Tibial artery (tissue), 4 donors: ENCODE measurements at regions of chr3 and their contacts with region 1.

Region 1: DNA sequence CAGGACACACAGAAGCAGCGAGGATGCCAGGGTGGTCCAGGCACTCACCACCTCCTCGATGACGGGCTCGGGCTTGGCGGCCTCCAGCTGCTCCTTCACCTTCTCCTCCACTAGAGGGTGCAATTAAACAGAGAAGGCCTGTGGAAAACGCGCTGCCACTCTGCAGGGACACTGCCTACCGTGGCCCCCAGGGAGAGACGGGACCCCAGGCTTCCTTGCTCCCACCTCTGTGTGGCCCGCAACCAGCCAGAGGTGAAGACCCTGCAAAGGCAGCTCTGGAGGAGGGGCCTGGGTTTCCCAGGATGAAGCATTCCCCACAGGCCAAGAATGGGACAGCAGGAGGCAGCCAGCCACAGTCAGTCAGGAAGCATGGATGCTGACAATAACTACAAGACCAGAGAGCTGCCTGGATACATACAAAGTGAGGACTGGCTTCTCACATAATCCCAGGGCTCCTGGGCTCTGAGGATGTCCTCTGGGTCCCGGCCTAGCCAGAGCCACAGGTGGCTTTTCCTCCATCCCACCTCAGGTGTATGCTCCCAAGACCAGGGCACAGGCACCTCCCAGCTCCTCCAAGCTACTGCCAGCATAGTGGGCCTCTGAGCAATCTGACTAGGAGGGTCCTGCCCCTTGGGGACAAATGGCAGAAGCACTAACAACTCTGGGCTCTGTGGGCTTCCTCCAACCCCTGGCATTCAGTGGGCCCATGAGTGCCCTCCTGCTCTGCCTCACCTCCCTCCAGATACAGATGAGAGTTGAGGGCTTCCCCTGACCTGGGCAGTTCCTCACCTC is 46.2 kb downstream of the PTH1R start:
- DNase-seq: peak; percentile 16 to 67
- H3K4me3 ChIP-seq: no peak overlapping the region
- H3K27ac ChIP-seq: no peak overlapping the region
- H3K4me1 ChIP-seq: peaks cover 0 to 54% (median 41%) of the 10 kb centered on the region in 4 donors
- H3K27me3 ChIP-seq: no peaks in the 10 kb centered on the region
- CTCF ChIP-seq: peak; percentile 71 to 75

Region 2: DNA sequence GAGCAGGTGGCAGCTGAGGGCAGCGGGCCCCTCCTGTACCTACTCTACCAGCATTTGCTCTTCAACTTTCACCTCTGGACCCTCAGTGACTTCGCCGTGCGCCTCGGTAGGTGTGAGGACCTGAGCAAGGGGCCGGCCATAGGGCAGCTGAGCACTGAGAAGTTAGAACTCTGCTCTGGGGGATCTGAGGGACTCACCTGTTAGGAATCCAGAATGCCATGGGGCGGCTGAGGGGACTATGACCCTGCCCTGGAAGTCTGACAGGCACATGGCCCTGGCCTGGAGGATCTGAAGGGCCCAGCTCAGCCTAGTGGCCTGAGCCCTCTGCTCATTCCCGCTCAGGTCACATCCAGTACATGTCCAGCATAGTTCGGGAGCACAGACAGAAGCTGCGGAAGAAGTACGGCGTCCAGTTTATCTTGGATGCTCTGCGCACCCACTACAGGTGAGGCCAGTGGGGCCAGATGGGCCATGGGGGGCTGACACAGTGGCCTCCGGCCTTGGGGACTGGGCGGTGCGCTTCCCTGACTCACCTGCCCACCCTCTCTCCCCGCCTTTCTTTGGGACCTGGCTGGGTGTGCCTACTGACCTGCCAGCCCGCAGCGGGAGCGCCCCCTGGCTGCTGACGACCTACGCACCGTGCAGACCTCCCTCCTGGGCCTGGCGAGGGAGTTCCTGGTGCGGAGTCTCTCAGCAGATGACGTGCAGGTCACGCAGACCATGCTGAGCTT is 74.5 kb after region 1 on chr3:
- intact Hi-C with region 1: loop called (anchors 5 kb)
- DNase-seq: peak; percentile 53 to 81
- H3K4me3 ChIP-seq: no peak overlapping the region
- H3K27ac ChIP-seq: no peak overlapping the region
- H3K4me1 ChIP-seq: no peaks in the 10 kb centered on the region
- H3K27me3 ChIP-seq: no peaks in the 10 kb centered on the region
- CTCF ChIP-seq: peak; percentile 73 to 75

Region 3: GRCh38 chr3:47324278-47324865 is 400.6 kb after region 1 on chr3:
- intact Hi-C with region 1: loop called (anchors 10 kb)
- DNase-seq: peak in 1 of 2 donors; percentile 53
- H3K4me3 ChIP-seq: no peak overlapping the region
- H3K27ac ChIP-seq: no peak overlapping the region
- H3K4me1 ChIP-seq: no peaks in the 10 kb centered on the region
- H3K27me3 ChIP-seq: no peaks in the 10 kb centered on the region
- CTCF ChIP-seq: peak; percentile 60 to 64